ENCODE measurements at regions of chr1 and their contacts with region 1.

Region 1: DNA sequence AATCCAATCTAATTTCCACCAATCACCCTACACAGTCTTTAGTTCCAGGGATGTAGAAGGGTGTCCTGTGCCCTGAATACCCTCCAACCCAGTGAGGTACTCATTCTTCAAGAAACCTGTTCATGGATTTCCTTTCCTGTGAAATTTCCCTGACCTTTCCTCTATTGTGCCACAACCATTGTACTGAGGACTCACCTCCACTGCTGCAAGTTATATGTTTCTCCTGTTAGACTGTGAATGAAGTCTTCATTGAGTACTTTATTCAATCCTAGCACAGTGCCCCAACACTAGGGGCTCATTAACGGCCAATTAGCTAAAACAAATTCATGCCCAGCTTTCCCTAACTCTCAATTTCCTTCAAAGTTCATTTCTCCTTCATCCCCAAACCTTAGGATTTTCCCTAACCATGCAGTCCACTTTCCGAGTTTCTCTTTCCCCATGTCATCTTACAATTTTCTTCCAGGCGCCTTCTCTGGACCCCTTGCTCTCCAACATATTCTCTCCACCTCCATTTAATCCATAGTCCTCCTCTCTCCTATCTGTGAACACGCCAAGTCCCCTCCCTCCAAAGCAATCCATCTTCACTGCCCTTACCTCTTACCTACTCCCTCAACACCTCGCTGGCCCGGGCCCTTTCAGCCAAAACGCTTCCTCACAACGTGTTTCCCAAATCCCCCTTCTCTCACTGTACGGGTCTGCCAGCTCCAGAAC is 1.3 kb downstream of the TRIM33 start:
- DNase-seq: no peak
- H3K4me3 Mint-ChIP-seq: peak overlapping the region; percentile 89
- H3K27ac Mint-ChIP-seq: peak overlapping the region; percentile 66
- H3K4me1 Mint-ChIP-seq: peaks cover 34% of the 10 kb centered on the region
- H3K27me3 Mint-ChIP-seq: no peaks in the 10 kb centered on the region
- CTCF ChIP-seq: no peak

Region 2: DNA sequence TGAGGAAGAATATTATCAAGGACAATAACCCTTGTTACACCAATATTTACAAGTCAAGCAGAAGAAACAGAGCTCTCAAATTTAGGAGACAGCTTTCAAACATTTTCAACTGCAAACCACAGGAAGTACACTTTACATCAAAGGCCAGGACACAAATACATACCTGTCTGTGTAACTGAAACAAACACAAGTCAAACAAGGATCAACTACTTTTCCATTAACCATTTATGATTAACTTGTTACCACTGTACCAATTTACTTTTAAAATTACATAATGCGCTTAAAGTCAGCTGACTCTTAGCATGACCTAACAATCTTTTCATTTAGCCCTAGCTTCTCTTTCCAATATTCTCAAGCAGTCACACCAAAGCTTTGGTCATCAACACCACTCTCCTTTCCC is 42.2 kb before region 1 on chr1:
- CTCF ChIA-PET with region 1: interaction called, 3 read pairs
- intact Hi-C with region 1: loop called (anchors 5 kb)
- DNase-seq: no peak
- H3K4me3 Mint-ChIP-seq: peak overlapping the region; percentile 15
- H3K27ac Mint-ChIP-seq: peak overlapping the region; percentile 26
- H3K4me1 Mint-ChIP-seq: peaks cover 48% of the 10 kb centered on the region
- H3K27me3 Mint-ChIP-seq: no peaks in the 10 kb centered on the region
- CTCF ChIP-seq: no peak

Region 3: DNA sequence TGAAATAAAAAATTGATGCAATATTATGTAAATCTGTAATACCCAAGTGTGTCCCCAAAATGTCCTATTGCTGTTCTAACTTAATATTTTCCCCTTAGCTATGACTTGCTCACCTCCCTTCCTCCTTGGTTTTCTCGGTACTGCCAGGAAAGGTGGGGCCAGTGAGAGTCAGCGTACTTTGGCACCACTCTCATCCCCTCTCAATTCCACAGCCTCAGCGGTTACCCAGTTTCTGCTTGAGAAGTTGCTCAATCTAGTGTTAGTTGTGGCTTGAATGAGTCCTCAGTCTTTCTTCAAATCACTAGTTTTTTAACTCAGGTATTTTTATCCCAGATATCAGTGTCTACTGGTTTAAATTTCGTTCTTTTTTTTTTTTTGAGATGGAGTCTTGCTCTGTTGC is 39.4 kb after region 1 on chr1:
- CTCF ChIA-PET with region 1: no interaction called
- intact Hi-C with region 1: no loop called
- DNase-seq: no peak
- H3K4me3 Mint-ChIP-seq: no peak overlapping the region
- H3K27ac Mint-ChIP-seq: no peak overlapping the region
- H3K4me1 Mint-ChIP-seq: no peaks in the 10 kb centered on the region
- H3K27me3 Mint-ChIP-seq: no peaks in the 10 kb centered on the region
- CTCF ChIP-seq: no peak

Measured in Calu3 (cell line).